ENCODE measurements at regions of chr1 and their contacts with region 1.

Region 1: DNA sequence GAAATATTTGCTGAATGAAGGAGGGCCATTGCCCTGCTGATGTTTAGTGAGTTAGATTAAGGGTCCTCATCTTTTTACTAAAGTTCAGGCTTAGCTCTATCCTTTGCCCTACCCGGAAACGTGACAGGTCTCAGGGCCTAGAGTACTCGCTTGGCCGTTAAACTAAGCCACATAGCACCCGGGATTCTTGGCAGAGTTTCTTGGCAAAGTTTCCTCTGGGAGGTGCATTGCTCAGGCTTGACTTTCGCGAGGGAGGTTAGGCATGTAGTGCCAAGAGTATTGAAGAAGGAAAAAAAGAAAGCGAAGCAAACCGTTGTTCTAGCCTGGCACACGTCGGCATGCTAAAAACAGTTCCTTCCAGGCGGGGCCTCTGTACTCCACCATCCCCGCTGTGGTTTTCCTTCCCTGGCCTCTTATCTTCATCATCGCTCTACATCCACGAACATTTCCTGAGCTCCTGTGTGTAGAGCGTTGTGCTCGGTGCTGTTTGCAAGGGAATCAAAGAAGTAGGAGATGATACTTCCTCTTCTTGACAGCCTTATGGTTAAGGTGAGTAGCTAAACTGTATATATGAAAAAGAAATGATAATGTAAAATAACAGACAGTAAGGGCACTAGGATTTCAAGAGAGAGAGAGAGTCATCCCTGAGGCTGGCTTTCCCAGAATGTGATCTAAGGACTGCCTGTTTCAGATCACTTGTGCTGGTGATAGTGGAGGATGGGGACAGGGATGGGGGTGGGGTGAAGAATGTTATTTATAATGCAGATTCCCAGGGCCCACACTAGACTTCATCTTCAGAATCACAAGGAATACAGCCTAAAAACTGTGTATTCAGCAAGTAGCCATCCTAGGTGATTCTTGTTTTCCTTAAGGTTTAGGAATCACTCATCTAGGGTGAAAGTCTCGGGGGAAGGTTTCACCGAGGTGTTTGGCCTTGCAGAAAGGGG is 18.8 kb downstream of the RNF220 start:
- DNase-seq: peak; percentile 72 to 77
- ATAC-seq: peak; percentile 85
- H3K4me3 ChIP-seq: no peak overlapping the region
- H3K27ac ChIP-seq: peak overlapping the region in 1 of 2 donors; percentile 38
- H3K4me1 ChIP-seq: peaks cover 0 to 2% of the 10 kb centered on the region in 2 donors
- H3K27me3 ChIP-seq: no peaks in the 10 kb centered on the region

Region 2: GRCh38 chr1:44485229-44485933 is 61.5 kb after region 1 on chr1:
- intact Hi-C with region 1: loop called (anchors 5 kb)
- DNase-seq: no peak
- ATAC-seq: peak; percentile 76
- H3K4me3 ChIP-seq: no peak overlapping the region
- H3K27ac ChIP-seq: peak overlapping the region; percentile 60 to 75
- H3K4me1 ChIP-seq: peaks cover 0 to 2% of the 10 kb centered on the region in 2 donors
- H3K27me3 ChIP-seq: no peaks in the 10 kb centered on the region

Region 3: GRCh38 chr1:44531785-44532566 is 108.1 kb after region 1 on chr1:
- intact Hi-C with region 1: no loop called
- DNase-seq: no peak
- ATAC-seq: no peak
- H3K4me3 ChIP-seq: no peak overlapping the region
- H3K27ac ChIP-seq: no peak overlapping the region
- H3K4me1 ChIP-seq: no peaks in the 10 kb centered on the region
- H3K27me3 ChIP-seq: no peaks in the 10 kb centered on the region